Activated naive CD4-positive, alpha-beta T cell treated with anti-CD3 and anti-CD28 coated beads, Interleukin-2, amount 10 ng/mL, durations not matched to agents 7 days and 5 days (primary cell): ENCODE measurements at regions of chr3 and their contacts with region 1.

Region 1: DNA sequence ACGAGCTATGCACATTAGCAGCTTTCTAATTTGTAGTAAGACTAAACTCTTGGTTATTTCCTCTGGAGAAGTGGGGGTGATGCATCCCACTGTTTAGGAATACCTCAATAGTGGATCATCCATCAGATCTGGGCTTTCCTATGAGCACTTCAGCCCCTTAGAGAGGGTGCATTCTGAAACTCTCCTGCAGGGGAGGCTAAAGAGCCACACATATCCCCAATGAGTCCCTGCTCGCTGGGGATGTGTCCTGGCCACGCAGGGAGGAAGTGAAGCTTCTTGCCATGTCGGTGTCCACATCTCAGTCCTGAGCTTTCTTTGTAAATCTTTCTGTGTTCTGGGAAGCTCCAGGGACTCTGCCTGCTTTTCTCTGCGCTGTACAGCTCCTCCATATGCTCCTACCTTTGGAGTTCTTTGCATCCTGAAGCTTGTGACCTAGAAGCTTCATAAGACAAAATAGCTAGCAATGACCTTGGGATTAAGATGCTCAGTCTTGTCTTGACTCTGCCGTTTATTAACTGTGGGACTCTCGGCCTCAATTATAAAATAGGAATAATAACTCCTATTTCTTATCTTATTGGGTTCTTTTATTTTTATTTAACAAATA is 28.3 kb upstream of the MASP1 start:
- DNase-seq: peak; percentile 76
- H3K4me3 Mint-ChIP-seq: no peak overlapping the region
- H3K27ac Mint-ChIP-seq: no peak overlapping the region
- H3K4me1 Mint-ChIP-seq: peaks cover 10% of the 10 kb centered on the region
- H3K27me3 Mint-ChIP-seq: peaks cover 42% of the 10 kb centered on the region

Region 2: GRCh38 chr3:187161556-187161955 is 158.2 kb before region 1 on chr3:
- CTCF ChIA-PET with region 1: no interaction called
- DNase-seq: no peak
- H3K4me3 Mint-ChIP-seq: no peak overlapping the region
- H3K27ac Mint-ChIP-seq: no peak overlapping the region
- H3K4me1 Mint-ChIP-seq: no peaks in the 10 kb centered on the region
- H3K27me3 Mint-ChIP-seq: peaks cover 44% of the 10 kb centered on the region

Region 3: GRCh38 chr3:187223799-187224198 is 96.0 kb before region 1 on chr3:
- CTCF ChIA-PET with region 1: interaction called, 22 read pairs
- DNase-seq: no peak
- H3K4me3 Mint-ChIP-seq: no peak overlapping the region
- H3K27ac Mint-ChIP-seq: no peak overlapping the region
- H3K4me1 Mint-ChIP-seq: no peaks in the 10 kb centered on the region
- H3K27me3 Mint-ChIP-seq: peaks cover 31% of the 10 kb centered on the region

Region 4: GRCh38 chr3:187368251-187369088 is 48.7 kb after region 1 on chr3 and contains the start of gene RTP4:
- CTCF ChIA-PET with region 1: interaction called, 32 read pairs
- DNase-seq: peak; percentile 56
- H3K4me3 Mint-ChIP-seq: peak within 1 kb of the TSS; percentile 95
- H3K27ac Mint-ChIP-seq: peak within 1 kb of the TSS; percentile 99
- H3K4me1 Mint-ChIP-seq: peaks cover 27% of the 10 kb centered on the region
- H3K27me3 Mint-ChIP-seq: no peaks in the 10 kb centered on the region

Region 5: DNA sequence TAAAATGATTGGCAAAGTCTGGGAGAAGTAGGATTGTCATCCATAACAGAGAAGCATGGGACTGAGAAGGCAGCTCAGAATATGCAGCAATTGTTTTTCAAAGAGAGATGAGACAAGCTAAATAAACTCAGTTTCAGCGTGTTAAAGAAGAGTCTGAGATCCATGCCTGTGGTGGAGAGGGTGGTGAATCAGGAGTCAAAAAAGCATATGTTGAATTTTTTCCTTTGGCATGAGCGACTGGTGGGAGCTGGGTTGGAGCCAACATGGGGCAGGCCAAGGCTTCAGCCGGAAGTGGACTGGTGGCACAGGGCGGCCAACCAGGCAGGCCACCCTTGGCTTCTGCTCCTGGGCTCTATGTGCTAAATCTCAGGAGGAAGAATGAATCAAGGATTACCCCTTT is 248.4 kb after region 1 on chr3:
- CTCF ChIA-PET with region 1: interaction called, 10 read pairs
- DNase-seq: no peak
- H3K4me3 Mint-ChIP-seq: no peak overlapping the region
- H3K27ac Mint-ChIP-seq: no peak overlapping the region
- H3K4me1 Mint-ChIP-seq: no peaks in the 10 kb centered on the region
- H3K27me3 Mint-ChIP-seq: peaks cover 29% of the 10 kb centered on the region

Region 6: DNA sequence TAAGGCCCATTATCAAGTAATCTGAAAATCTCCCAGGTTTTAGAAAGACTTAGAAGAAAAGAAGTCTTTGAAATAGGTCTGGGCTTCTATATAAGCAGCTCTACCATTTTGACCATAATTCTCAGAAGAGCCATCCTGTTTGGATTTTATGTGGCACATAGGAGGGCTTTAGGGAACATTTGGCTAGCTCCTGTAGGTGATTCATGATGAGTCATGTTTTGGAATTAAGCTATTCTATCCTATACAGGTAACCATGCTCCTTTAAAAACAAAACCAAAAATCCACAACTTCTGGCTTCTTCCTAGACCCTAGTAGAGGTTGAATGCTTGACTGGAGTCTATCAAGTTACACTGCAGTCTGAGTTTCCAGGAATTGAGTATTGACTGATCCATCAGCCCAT is 341.5 kb after region 1 on chr3:
- CTCF ChIA-PET with region 1: interaction called, 10 read pairs
- DNase-seq: no peak
- H3K4me3 Mint-ChIP-seq: no peak overlapping the region
- H3K27ac Mint-ChIP-seq: no peak overlapping the region
- H3K4me1 Mint-ChIP-seq: no peaks in the 10 kb centered on the region
- H3K27me3 Mint-ChIP-seq: no peaks in the 10 kb centered on the region

Region 7: DNA sequence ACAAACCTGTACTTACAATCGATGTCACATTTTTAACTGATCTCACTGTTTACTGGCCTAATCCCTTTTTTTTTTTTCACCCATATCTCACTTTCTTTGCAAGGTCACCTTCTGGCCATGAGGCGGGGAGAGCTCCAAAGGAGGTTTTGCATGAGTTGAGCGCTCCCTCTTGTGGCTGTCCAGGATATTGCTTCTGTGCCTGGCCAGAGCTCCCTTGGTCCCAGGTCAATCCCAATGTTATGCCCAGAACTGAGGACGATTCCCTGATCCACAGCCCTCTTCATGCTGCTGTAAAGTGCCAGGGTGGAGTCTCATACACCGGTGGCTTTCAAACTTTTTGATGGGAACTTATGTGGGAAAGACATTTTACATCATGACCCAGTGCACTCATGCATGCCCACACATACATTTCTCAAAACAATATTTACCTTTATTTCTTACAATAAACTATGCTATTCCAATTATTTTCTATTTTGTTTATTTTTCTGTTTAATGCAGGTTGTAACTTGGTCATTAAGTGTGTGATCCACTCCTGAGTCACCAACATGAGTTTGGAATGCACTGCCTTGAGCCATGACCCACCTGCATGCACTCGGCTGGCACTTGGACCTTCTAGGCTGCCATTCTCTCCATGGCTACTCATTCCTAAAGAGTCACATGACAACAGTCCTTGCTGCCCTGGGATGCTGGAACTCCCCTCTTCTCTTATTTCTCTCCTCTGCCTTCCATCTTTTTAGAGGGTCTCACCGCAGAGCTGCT is 360.0 kb after region 1 on chr3:
- CTCF ChIA-PET with region 1: interaction called, 394 read pairs
- DNase-seq: peak; percentile 78
- H3K4me3 Mint-ChIP-seq: no peak overlapping the region
- H3K27ac Mint-ChIP-seq: no peak overlapping the region
- H3K4me1 Mint-ChIP-seq: no peaks in the 10 kb centered on the region
- H3K27me3 Mint-ChIP-seq: peaks cover 15% of the 10 kb centered on the region